CD8-positive, alpha-beta memory T cell (primary cell): ENCODE measurements at regions of chr2 and their contacts with region 1.

Region 1: GRCh38 chr2:219160186-219161017 is at the start of gene NHEJ1:
- DNase-seq: peak; percentile 87 to 95 (median 93)
- H3K4me3 ChIP-seq: peak within 1 kb of the TSS; percentile 64
- H3K4me3 Mint-ChIP-seq: peak within 1 kb of the TSS; percentile 93 to 99 (median 95)
- H3K27ac ChIP-seq: peak within 1 kb of the TSS; percentile 74
- H3K27ac Mint-ChIP-seq: peak within 1 kb of the TSS; percentile 86 to 98 (median 95)
- H3K4me1 ChIP-seq: peaks cover 13% of the 10 kb centered on the region
- H3K4me1 Mint-ChIP-seq: peaks cover 16 to 17% (median 17%) of the 10 kb centered on the region in 3 donors
- H3K27me3 ChIP-seq: no peaks in the 10 kb centered on the region
- H3K27me3 Mint-ChIP-seq: peaks cover 0 to 2% of the 10 kb centered on the region in 2 donors
- total RNA-seq, gene NHEJ1: 22.4 to 24.5 TPM

Region 2: GRCh38 chr2:219029829-219030165 is 130.6 kb before region 1 on chr2:
- CTCF ChIA-PET with region 1: interaction called, 65 read pairs
- POLR2A ChIA-PET with region 1: no interaction called
- DNase-seq: peak; percentile 62 to 84 (median 68)
- H3K4me3 ChIP-seq: no peak overlapping the region
- H3K4me3 Mint-ChIP-seq: no peak overlapping the region
- H3K27ac ChIP-seq: no peak overlapping the region
- H3K27ac Mint-ChIP-seq: peak overlapping the region in 1 of 8 donors; percentile 88
- H3K4me1 ChIP-seq: no peaks in the 10 kb centered on the region
- H3K4me1 Mint-ChIP-seq: no peaks in the 10 kb centered on the region
- H3K27me3 ChIP-seq: peaks cover 4% of the 10 kb centered on the region
- H3K27me3 Mint-ChIP-seq: peaks cover 14 to 44% of the 10 kb centered on the region in 2 donors

Region 3: GRCh38 chr2:219057709-219058540 is 102.5 kb before region 1 on chr2:
- CTCF ChIA-PET with region 1: interaction called, 70 read pairs
- POLR2A ChIA-PET with region 1: interaction called, 3 read pairs
- DNase-seq: peak; percentile 66 to 81 (median 68)
- H3K4me3 ChIP-seq: no peak overlapping the region
- H3K4me3 Mint-ChIP-seq: peak overlapping the region; percentile 11 to 84 (median 65)
- H3K27ac ChIP-seq: no peak overlapping the region
- H3K27ac Mint-ChIP-seq: peak overlapping the region in 3 of 8 donors; percentile 47 to 70 (median 55)
- H3K4me1 ChIP-seq: peaks cover 21% of the 10 kb centered on the region
- H3K4me1 Mint-ChIP-seq: peaks cover 12 to 30% (median 23%) of the 10 kb centered on the region in 3 donors
- H3K27me3 ChIP-seq: peaks cover 40% of the 10 kb centered on the region
- H3K27me3 Mint-ChIP-seq: peaks cover 56 to 67% of the 10 kb centered on the region in 2 donors

Region 4: DNA sequence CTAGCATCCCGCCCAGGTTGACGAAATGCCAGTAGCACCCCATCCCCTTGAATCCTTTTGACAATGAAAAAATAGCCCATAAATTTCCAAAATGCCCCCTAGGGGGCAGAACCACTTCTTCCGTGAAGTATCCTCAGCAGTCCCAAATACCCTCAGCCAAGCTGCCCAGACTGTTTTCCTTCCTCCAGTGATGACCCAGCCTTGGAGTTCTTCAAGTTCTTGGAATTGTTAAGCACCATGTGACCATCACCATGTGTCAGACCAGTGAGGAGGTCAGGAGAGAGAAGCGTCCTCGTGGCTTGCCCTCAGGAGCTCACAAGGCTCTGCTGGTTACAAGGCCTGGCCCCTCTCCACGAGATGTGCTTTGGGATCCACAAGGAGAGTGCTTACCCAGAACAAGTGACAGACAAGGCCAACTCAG is 10.8 kb after region 1 on chr2:
- CTCF ChIA-PET with region 1: interaction called, 22 read pairs
- POLR2A ChIA-PET with region 1: interaction called, 11 read pairs
- DNase-seq: peak in 4 of 5 donors; percentile 12 to 50 (median 42)
- H3K4me3 ChIP-seq: no peak overlapping the region
- H3K4me3 Mint-ChIP-seq: peak overlapping the region in 1 of 7 donors; percentile 65
- H3K27ac ChIP-seq: no peak overlapping the region
- H3K27ac Mint-ChIP-seq: peak overlapping the region in 6 of 8 donors; percentile 43 to 84 (median 72)
- H3K4me1 ChIP-seq: peaks cover 21% of the 10 kb centered on the region
- H3K4me1 Mint-ChIP-seq: peaks cover 30 to 54% (median 45%) of the 10 kb centered on the region in 3 donors
- H3K27me3 ChIP-seq: no peaks in the 10 kb centered on the region
- H3K27me3 Mint-ChIP-seq: peaks cover 0 to 2% of the 10 kb centered on the region in 2 donors

Region 5: GRCh38 chr2:219177552-219178376 is 17.4 kb after region 1 on chr2 and contains the start of gene RETREG2:
- CTCF ChIA-PET with region 1: interaction called, 22 read pairs
- POLR2A ChIA-PET with region 1: interaction called, 11 read pairs
- DNase-seq: peak; percentile 73 to 90 (median 85)
- H3K4me3 ChIP-seq: peak within 1 kb of the TSS; percentile 64
- H3K4me3 Mint-ChIP-seq: peak within 1 kb of the TSS; percentile 94 to 98 (median 96)
- H3K27ac ChIP-seq: peak within 1 kb of the TSS; percentile 85
- H3K27ac Mint-ChIP-seq: peak within 1 kb of the TSS; percentile 95 to 100 (median 99)
- H3K4me1 ChIP-seq: peaks cover 54% of the 10 kb centered on the region
- H3K4me1 Mint-ChIP-seq: peaks cover 55 to 79% (median 75%) of the 10 kb centered on the region in 3 donors
- H3K27me3 ChIP-seq: no peaks in the 10 kb centered on the region
- H3K27me3 Mint-ChIP-seq: no peaks in the 10 kb centered on the region
- total RNA-seq, gene RETREG2: 67.6 to 76.1 TPM

Region 6: GRCh38 chr2:219206442-219207253 is 46.2 kb after region 1 on chr2 and contains the start of gene ZFAND2B:
- CTCF ChIA-PET with region 1: interaction called, 70 read pairs
- POLR2A ChIA-PET with region 1: interaction called, 11 read pairs
- DNase-seq: peak; percentile 95 to 98 (median 96)
- H3K4me3 ChIP-seq: peak within 1 kb of the TSS; percentile 81
- H3K4me3 Mint-ChIP-seq: peak within 1 kb of the TSS; percentile 88 to 97 (median 94)
- H3K27ac ChIP-seq: peak within 1 kb of the TSS; percentile 85
- H3K27ac Mint-ChIP-seq: peak within 1 kb of the TSS; percentile 95 to 99 (median 96)
- H3K4me1 ChIP-seq: peaks cover 29% of the 10 kb centered on the region
- H3K4me1 Mint-ChIP-seq: peaks cover 32 to 53% (median 49%) of the 10 kb centered on the region in 3 donors
- H3K27me3 ChIP-seq: no peaks in the 10 kb centered on the region
- H3K27me3 Mint-ChIP-seq: no peaks in the 10 kb centered on the region
- total RNA-seq, gene ZFAND2B: 32.4 to 36.8 TPM

Region 7: DNA sequence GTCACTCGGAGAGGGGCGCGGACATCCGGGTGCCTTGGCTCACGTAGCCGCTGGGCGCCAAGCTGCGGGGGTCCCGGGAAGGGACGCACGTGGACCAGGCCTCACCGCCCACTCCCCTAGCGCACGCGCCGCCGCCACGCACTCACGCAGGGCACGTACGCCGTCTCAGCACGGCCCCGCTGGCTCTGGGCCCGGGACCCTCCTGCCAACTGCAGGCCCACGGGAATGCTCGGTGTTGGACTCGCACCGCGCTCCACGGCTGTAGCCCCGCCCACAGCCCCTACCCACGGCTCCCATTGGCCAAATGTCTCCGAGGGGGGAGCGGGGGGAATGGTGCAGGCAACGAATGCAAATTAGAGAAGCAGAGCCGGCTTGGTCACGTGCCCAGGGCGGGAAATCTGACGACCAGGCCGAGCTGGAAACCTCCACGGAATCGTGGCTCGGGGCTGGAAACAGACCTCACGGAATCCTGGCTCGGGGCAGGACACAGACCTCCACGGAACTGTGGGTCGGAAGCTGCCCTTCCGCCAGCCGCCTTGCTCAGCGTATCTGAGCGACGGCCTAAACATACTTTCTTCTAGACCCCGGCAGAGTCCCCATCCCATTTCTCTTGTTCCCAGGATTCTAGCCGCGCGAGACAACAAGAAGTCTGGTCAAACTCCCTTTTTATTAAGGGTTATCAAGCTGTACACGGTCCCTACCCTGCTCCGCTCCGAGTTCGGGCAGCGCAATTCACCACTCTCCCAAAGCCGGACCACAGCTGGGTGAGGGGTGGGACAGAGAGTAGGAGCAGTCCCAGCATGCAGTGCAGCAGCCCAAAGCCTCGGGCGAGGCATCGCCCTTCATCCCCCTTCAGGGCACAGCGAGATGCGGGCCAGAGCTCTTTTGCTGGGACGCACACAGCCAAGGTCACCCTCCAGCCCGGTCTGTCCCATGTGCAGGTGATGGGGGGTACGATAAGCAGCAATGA is 58.6 kb after region 1 on chr2 and contains the start of gene ABCB6:
- CTCF ChIA-PET with region 1: interaction called, 40 read pairs
- POLR2A ChIA-PET with region 1: no interaction called
- DNase-seq: peak; percentile 70 to 87 (median 83)
- H3K4me3 ChIP-seq: peak within 1 kb of the TSS; percentile 72
- H3K4me3 Mint-ChIP-seq: peak within 1 kb of the TSS; percentile 66 to 91 (median 83)
- H3K27ac ChIP-seq: peak within 1 kb of the TSS; percentile 68
- H3K27ac Mint-ChIP-seq: peak within 1 kb of the TSS; percentile 36 to 88 (median 79)
- H3K4me1 ChIP-seq: peaks cover 18% of the 10 kb centered on the region
- H3K4me1 Mint-ChIP-seq: peaks cover 18 to 26% (median 18%) of the 10 kb centered on the region in 3 donors
- H3K27me3 ChIP-seq: no peaks in the 10 kb centered on the region
- H3K27me3 Mint-ChIP-seq: peaks cover 0 to 2% of the 10 kb centered on the region in 2 donors
- total RNA-seq, gene ABCB6: 22.1 to 22.8 TPM